ENCODE measurements at regions of chr3 and their contacts with region 1.

Region 1: GRCh38 chr3:158790901-158791589 is 10.8 kb upstream of the MFSD1 start:
- DNase-seq: peak in 1 of 10 donors; percentile 21

Region 2: GRCh38 chr3:158659454-158660237 is 131.4 kb before region 1 on chr3:
- intact Hi-C with region 1: loop called (anchors 2 kb)
- DNase-seq: peak in 6 of 10 donors; percentile 25 to 93 (median 52)

Region 3: GRCh38 chr3:158727206-158728060 is 63.6 kb before region 1 on chr3:
- intact Hi-C with region 1: loop called (anchors 2 kb)
- DNase-seq: peak in 1 of 10 donors; percentile 38

Measured in posterior cingulate gyrus (tissue), 11 donors.